PC-9 (cell line): ENCODE measurements at regions of chr2 and their contacts with region 1.

Region 1: GRCh38 chr2:57759822-57760300 is 286.7 kb upstream of the VRK2 start:
- DNase-seq: peak; percentile 61 to 88
- H3K4me3 ChIP-seq: peak overlapping the region; percentile 40; the same call in 1 of the 2 replicates
- H3K27ac ChIP-seq: no peak overlapping the region
- H3K4me1 ChIP-seq: 0 out of 2 replicates have a peak, but pooled peaks cover 5% of the 10 kb centered on the region
- H3K27me3 ChIP-seq: no peaks in the 10 kb centered on the region
- CTCF ChIP-seq: peak; percentile 98

Region 2: GRCh38 chr2:57881998-57882884 is 122.4 kb after region 1 on chr2:
- CTCF ChIA-PET with region 1: no interaction called
- POLR2A ChIA-PET with region 1: no interaction called
- intact Hi-C with region 1: loop called (anchors 5 kb)
- DNase-seq: peak; percentile 43 to 81
- H3K4me3 ChIP-seq: peak overlapping the region; percentile 27; the same call in 1 of the 2 replicates
- H3K27ac ChIP-seq: peak overlapping the region; percentile 79
- H3K4me1 ChIP-seq: peaks cover 40% of the 10 kb centered on the region
- H3K27me3 ChIP-seq: no peaks in the 10 kb centered on the region
- CTCF ChIP-seq: no peak

Region 3: GRCh38 chr2:58448065-58448507 is 688.2 kb after region 1 on chr2:
- CTCF ChIA-PET with region 1: interaction called, 4 read pairs
- POLR2A ChIA-PET with region 1: no interaction called
- intact Hi-C with region 1: loop called (anchors 1 kb)
- DNase-seq: peak in 1 of 2 experiments; percentile 64
- H3K4me3 ChIP-seq: no peak overlapping the region
- H3K27ac ChIP-seq: no peak overlapping the region
- H3K4me1 ChIP-seq: no peaks in the 10 kb centered on the region
- H3K27me3 ChIP-seq: no peaks in the 10 kb centered on the region
- CTCF ChIP-seq: peak; percentile 70

Region 4: GRCh38 chr2:58562276-58562675 is 802.4 kb after region 1 on chr2:
- CTCF ChIA-PET with region 1: no interaction called
- POLR2A ChIA-PET with region 1: no interaction called
- intact Hi-C with region 1: loop called (anchors 5 kb)
- DNase-seq: peak in 1 of 2 experiments; percentile 55
- H3K4me3 ChIP-seq: no peak overlapping the region
- H3K27ac ChIP-seq: no peak overlapping the region
- H3K4me1 ChIP-seq: peaks cover 7% of the 10 kb centered on the region
- H3K27me3 ChIP-seq: no peaks in the 10 kb centered on the region
- CTCF ChIP-seq: no peak